ENCODE measurements at regions of chr10 and their contacts with region 1.

Region 1: GRCh38 chr10:97190450-97190849 is 4.7 kb upstream of the SLIT1 start:
- DNase-seq: no peak
- H3K4me3 ChIP-seq: no peak overlapping the region
- H3K27ac ChIP-seq: no peak overlapping the region
- H3K4me1 ChIP-seq: peaks cover 0 to 17% (median 5%) of the 10 kb centered on the region in 4 experiments; a peak in 5 of 7 replicates
- H3K27me3 ChIP-seq: peaks cover 11 to 29% (median 26%) of the 10 kb centered on the region in 4 experiments
- CTCF ChIP-seq: no peak
- EP300 ChIP-seq: no peak
- POLR2A ChIP-seq: no peak
- RAD21 ChIP-seq: no peak

Region 2: DNA sequence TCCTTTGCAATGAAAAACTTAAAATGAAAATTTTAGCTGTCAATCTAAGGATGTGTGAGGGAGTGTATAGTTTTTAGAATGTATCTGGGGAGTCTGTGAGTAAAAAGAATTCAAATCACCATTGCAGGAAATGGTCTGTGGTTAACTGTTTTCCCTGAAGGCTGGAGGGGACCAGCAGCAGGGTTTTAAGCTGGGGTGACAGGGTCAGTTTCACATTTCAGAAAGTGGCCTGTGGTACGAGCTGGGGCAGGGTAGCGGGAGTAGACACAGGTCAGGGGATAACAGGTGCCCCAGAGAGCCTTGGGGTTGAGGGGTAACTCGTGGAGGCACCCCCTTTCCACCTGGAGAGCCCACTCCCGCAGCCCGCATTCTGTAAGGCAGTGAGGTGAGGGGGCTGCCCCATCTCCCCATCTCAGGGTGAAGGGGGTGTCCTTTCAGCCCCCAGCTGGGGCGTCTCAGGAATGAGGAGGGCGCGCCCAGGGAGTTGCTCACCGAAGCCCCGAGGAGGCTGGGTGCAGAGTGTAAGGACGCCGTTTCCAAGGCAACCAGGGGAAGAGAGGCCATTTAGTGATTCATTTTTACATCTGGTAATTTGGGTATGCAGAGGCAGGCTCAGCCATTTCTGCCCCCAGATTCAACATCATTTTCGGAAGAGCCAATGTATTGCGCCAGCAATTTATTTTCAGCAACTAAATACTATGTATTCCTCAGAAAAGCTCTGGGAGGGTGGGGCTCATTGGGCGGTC is 173.5 kb before region 1 on chr10:
- CTCF ChIA-PET with region 1: no interaction called
- POLR2A ChIA-PET with region 1: no interaction called
- DNase-seq: no peak
- H3K4me3 ChIP-seq: no peak overlapping the region
- H3K27ac ChIP-seq: no peak overlapping the region
- H3K4me1 ChIP-seq: peaks cover 0 to 9% (median 4%) of the 10 kb centered on the region in 4 experiments; a peak in 4 of 7 replicates
- H3K27me3 ChIP-seq: no peaks in the 10 kb centered on the region
- CTCF ChIP-seq: no peak
- EP300 ChIP-seq: no peak
- POLR2A ChIP-seq: no peak
- RAD21 ChIP-seq: no peak

Region 3: GRCh38 chr10:97179731-97180362 is 10.6 kb before region 1 on chr10:
- CTCF ChIA-PET with region 1: interaction called, 106 read pairs
- POLR2A ChIA-PET with region 1: no interaction called
- DNase-seq: peak; percentile 31 to 87
- H3K4me3 ChIP-seq: peak overlapping the region in 3 of 4 experiments; percentile 16 to 48 (median 27); a peak in 5 of 8 replicates
- H3K27ac ChIP-seq: no peak overlapping the region
- H3K4me1 ChIP-seq: peaks cover under 1 to 3% (median 2%) of the 10 kb centered on the region in 4 experiments; a peak in 6 of 7 replicates
- H3K27me3 ChIP-seq: peaks cover 10 to 30% (median 22%) of the 10 kb centered on the region in 4 experiments
- CTCF ChIP-seq: peak; percentile 80 to 84 (median 83)
- EP300 ChIP-seq: no peak
- POLR2A ChIP-seq: no peak
- RAD21 ChIP-seq: peak; percentile 80 to 88

Region 4: DNA sequence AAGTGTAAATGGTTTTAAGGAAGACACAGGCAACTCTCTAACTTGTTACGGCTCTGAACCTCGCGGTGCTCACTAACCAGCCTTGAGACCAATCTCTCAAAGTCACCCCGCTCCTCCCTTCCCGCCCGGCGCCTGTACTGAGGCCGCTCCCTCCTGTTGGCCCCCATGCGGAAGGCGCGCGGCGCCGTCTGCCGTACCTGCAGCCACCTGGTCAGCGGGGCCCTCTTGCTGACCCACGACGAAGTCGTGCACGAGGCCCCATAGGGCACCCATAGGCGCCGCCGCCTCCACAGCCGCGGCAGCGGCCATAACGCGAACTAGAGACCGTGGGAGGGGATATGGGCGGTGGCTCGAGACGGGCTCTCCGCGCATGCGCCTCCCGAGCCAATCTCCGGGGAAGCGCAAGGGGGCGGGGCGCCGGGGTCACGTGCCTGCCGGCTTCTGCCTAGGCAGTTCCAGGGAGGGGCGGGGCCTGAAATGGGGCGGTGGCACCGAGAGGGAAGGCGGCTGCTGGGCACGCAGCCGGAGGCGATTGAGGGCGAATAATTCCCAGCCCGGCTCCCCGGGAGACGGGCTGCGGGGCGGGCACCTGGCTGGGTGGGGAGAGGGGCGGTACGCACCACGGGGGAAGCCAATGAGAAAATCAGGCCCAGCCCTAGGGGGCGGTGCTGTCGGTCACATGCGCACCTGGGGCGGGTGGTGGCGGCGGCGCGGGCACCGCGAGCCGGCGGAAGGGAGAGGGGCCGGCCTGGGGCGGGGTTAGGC is 307.8 kb after region 1 on chr10 and contains the start of gene MMS19:
- CTCF ChIA-PET with region 1: no interaction called
- POLR2A ChIA-PET with region 1: no interaction called
- DNase-seq: peak; percentile 92 to 100
- H3K4me3 ChIP-seq: peak within 1 kb of the TSS; percentile 83 to 92 (median 89)
- H3K27ac ChIP-seq: peak within 1 kb of the TSS; percentile 74; the same call in 1 of the 2 replicates
- H3K4me1 ChIP-seq: peaks cover 6 to 14% (median 11%) of the 10 kb centered on the region in 4 experiments; a peak in 6 of 7 replicates
- H3K27me3 ChIP-seq: peaks cover 0 to 16% (median 13%) of the 10 kb centered on the region in 4 experiments; a peak in 5 of 7 replicates
- CTCF ChIP-seq: no peak
- EP300 ChIP-seq: no peak
- POLR2A ChIP-seq: peak; percentile 55 to 79
- RAD21 ChIP-seq: no peak
- total RNA-seq, gene MMS19: 128 and 130 TPM in 2 replicates

Measured in H1 (cell line).